ENCODE measurements at regions of chr11 and their contacts with region 1.

Region 1: GRCh38 chr11:22730319-22730718 is 63.9 kb downstream of the GAS2 start:
- DNase-seq: peak; percentile 14
- H3K4me3 Mint-ChIP-seq: no peak overlapping the region
- H3K27ac Mint-ChIP-seq: no peak overlapping the region
- H3K4me1 Mint-ChIP-seq: no peaks in the 10 kb centered on the region
- H3K27me3 Mint-ChIP-seq: no peaks in the 10 kb centered on the region
- CTCF ChIP-seq: no peak

Region 2: DNA sequence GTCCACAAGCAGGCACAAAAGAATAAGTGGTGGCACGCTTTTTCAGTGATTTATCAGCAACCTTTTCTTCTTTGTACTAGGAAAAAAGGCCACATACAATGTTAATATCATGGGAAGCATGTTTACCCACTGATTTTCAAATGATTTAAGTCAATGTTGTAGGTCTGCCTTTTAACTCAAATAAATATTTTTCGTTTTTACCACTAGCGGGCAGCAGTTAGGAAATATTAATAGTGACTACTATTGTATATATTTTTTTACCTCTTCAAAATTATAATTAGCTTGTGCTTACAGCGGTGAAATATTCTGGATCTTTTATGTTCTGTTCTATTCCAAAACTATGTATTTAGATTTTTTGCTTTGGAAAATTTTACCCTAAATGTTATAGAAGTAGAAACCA is 398.5 kb before region 1 on chr11:
- CTCF ChIA-PET with region 1: no interaction called
- intact Hi-C with region 1: loop called (anchors 5 kb)
- DNase-seq: no peak
- H3K4me3 Mint-ChIP-seq: no peak overlapping the region
- H3K27ac Mint-ChIP-seq: no peak overlapping the region
- H3K4me1 Mint-ChIP-seq: no peaks in the 10 kb centered on the region
- H3K27me3 Mint-ChIP-seq: peaks cover 8% of the 10 kb centered on the region
- CTCF ChIP-seq: no peak

Region 3: DNA sequence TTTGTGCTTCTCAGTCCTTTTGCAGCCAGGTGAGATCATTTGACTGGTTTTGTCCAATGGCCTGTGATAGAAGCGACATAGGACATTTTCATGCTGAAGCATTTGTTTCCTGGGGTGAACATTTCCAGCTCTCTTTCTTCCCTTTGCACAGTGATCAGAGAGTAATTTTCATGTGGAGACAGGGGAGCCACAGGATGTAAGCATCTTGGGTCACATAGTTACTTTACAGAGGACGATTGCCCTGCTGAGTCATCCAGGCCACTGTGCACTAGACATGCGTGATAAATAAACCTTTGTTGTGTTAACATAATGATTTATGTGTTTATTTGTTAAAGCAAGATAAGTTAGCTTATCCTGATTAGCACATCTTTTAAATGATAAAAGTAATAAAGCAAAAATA is 393.4 kb after region 1 on chr11:
- CTCF ChIA-PET with region 1: no interaction called
- intact Hi-C with region 1: no loop called
- DNase-seq: no peak
- H3K4me3 Mint-ChIP-seq: no peak overlapping the region
- H3K27ac Mint-ChIP-seq: no peak overlapping the region
- H3K4me1 Mint-ChIP-seq: peaks cover 14% of the 10 kb centered on the region
- H3K27me3 Mint-ChIP-seq: no peaks in the 10 kb centered on the region
- CTCF ChIP-seq: no peak

Measured in Calu3 (cell line).